ENCODE measurements at regions of chr9 and their contacts with region 1.

Region 1: DNA sequence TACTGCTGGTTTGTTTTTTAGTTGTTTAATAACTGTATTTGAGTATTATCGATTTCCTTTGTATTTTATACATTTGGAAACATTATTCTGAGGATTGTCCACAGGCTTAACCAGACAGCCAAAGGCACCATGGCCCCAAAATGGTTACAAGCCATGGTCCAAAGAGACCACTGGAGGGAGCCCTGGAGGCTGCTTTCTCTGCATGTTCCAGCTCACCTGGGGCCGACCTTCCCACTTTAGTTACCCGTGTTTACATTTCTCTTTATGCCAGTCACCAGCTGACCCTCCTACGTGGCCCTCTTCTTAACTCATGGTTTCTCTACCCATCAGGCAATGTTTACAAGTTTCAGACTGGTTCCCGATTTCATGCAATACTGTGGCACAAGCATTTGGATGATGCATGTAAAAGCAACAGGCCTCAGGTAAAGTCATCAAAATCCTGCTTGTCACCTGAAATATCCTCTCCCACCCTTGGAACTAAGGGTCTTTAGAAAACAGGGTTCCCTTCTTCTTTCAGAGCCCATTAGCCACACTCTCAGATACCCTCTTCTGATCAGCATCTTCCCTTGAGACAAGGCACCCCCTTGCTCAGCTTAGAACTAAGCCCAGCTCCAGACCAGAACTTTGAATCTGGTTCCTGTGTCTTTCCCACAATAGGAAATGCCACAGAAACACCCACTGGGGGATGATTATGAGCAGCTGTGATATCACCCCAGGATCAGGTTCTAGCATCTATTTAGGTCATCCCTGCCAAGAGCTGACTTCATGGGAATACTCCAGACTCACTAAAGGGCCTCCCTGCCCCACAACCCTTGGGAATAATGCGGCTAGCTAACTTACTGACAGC is 49.9 kb upstream of the GARNL3 start:
- DNase-seq: no peak
- ATAC-seq: peak; percentile 64 to 83 (median 73)
- H3K4me3 ChIP-seq: no peak overlapping the region
- H3K27ac ChIP-seq: no peak overlapping the region
- H3K4me1 ChIP-seq: no peaks in the 10 kb centered on the region
- H3K27me3 ChIP-seq: no peaks in the 10 kb centered on the region
- CTCF ChIP-seq: peak; percentile 76

Region 2: GRCh38 chr9:127347831-127348779 is 133.5 kb after region 1 on chr9:
- intact Hi-C with region 1: loop called in 1 of 2 experiments (anchors 5 kb)
- DNase-seq: no peak
- ATAC-seq: peak in 3 of 4 donors; percentile 50 to 60 (median 54)
- H3K4me3 ChIP-seq: no peak overlapping the region
- H3K27ac ChIP-seq: peak overlapping the region; percentile 78
- H3K4me1 ChIP-seq: peaks cover 10% of the 10 kb centered on the region
- H3K27me3 ChIP-seq: no peaks in the 10 kb centered on the region
- CTCF ChIP-seq: peak; percentile 28

Region 3: DNA sequence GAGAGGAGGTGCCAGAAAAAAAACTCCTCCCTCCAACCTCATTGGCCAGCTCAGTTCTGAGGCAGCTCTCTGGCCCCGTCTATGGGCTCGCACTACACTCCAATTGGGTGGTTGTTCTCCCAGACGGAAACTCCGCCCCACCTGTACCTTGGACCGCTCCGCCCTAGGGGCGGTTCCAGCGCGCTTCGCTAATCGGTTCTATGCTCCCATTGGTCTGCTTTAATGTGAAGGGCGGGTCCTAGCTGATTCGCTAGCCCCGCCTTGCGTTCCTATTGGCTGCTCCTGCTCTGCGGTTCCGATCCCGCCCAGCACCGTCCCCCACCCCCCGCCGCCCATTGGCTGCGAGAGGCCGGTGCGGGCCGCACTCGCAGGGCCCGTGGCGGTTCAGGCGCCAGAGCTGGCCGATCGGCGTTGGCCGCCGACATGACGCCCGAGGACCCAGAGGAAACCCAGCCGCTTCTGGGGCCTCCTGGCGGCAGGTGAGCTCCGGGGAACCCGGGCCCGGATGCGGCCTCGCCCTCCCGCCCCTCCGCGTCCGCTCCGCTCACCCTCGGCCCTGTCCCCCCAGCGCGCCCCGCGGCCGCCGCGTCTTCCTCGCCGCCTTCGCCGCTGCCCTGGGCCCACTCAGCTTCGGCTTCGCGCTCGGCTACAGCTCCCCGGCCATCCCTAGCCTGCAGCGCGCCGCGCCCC is 182.3 kb after region 1 on chr9 and contains the start of gene SLC2A8:
- intact Hi-C with region 1: loop called in 1 of 2 experiments (anchors 5 kb)
- DNase-seq: peak; percentile 98 to 99
- ATAC-seq: peak; percentile 94 to 97 (median 96)
- H3K4me3 ChIP-seq: peak within 1 kb of the TSS; percentile 94
- H3K27ac ChIP-seq: peak within 1 kb of the TSS; percentile 89
- H3K4me1 ChIP-seq: peaks cover 13% of the 10 kb centered on the region
- H3K27me3 ChIP-seq: no peaks in the 10 kb centered on the region
- CTCF ChIP-seq: peak; percentile 29
- total RNA-seq, gene SLC2A8: 15.8 to 18.7 (median 16.3) TPM